GM12878 (cell line): ENCODE measurements at regions of chr5 and their contacts with region 1.

Region 1: GRCh38 chr5:112109331-112110007 is 309.6 kb downstream of the EPB41L4A start:
- DNase-seq: no peak
- ATAC-seq: peak; percentile 39
- H3K4me3 ChIP-seq: no peak overlapping the region
- H3K27ac ChIP-seq: no peak overlapping the region
- H3K4me1 ChIP-seq: no peaks in the 10 kb centered on the region
- H3K27me3 ChIP-seq: no peaks in the 10 kb centered on the region
- CTCF ChIP-seq: no peak
- EP300 ChIP-seq: no peak
- POLR2A ChIP-seq: no peak
- RAD21 ChIP-seq: no peak

Region 2: GRCh38 chr5:112077180-112077579 is 32.3 kb before region 1 on chr5:
- CTCF ChIA-PET with region 1: interaction called, 4 read pairs
- POLR2A ChIA-PET with region 1: no interaction called
- RAD21 ChIA-PET with region 1: no interaction called
- SMC1A ChIA-PET with region 1: interaction called, 11 read pairs
- in situ Hi-C with region 1: no loop called
- intact Hi-C with region 1: no loop called
- DNase-seq: peak; percentile 25
- ATAC-seq: peak; percentile 81
- H3K4me3 ChIP-seq: no peak overlapping the region
- H3K27ac ChIP-seq: peak overlapping the region; percentile 6; the same call in 1 of the 2 replicates
- H3K4me1 ChIP-seq: no peaks in the 10 kb centered on the region
- H3K27me3 ChIP-seq: no peaks in the 10 kb centered on the region
- CTCF ChIP-seq: no peak
- EP300 ChIP-seq: no peak
- POLR2A ChIP-seq: no peak
- RAD21 ChIP-seq: no peak